ENCODE measurements at regions of chr2 and their contacts with region 1.

Region 1: GRCh38 chr2:235766278-235766677 is 272.4 kb downstream of the AGAP1 start:
- DNase-seq: peak; percentile 56
- ATAC-seq: peak; percentile 53
- H3K4me3 ChIP-seq: no peak overlapping the region
- H3K4me3 Mint-ChIP-seq: no peak overlapping the region
- H3K27ac ChIP-seq: no peak overlapping the region
- H3K27ac Mint-ChIP-seq: no peak overlapping the region
- H3K4me1 ChIP-seq: no peaks in the 10 kb centered on the region
- H3K4me1 Mint-ChIP-seq: no peaks in the 10 kb centered on the region
- H3K27me3 ChIP-seq: no peaks in the 10 kb centered on the region
- H3K27me3 Mint-ChIP-seq: peaks cover 6% of the 10 kb centered on the region
- CTCF ChIP-seq: peak; percentile 97

Region 2: DNA sequence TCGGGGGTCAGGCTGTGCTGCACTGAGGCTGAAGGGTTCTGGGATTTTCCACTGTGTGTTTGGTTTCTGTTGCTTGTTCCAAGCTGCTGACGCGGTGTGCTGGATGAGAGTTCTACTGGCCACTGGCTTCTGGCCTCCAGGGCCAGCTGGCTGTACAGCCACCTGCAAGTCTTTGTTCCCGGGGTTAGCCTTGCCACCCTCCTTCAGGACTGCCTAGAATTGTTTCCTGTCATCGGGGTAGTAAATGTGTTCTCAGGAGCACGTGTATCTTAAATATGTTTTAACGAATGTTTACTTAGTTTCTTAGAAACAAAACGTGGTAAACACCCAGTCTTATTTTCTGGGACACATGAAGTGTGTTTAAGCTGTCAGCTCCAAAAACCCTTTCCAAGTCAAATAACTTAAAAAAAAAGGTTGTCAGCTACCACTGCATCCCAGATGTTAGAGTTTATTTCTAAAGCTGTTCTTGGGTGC is 41.2 kb before region 1 on chr2:
- CTCF ChIA-PET with region 1: no interaction called
- POLR2A ChIA-PET with region 1: no interaction called
- intact Hi-C with region 1: no loop called
- DNase-seq: no peak
- ATAC-seq: no peak
- H3K4me3 ChIP-seq: no peak overlapping the region
- H3K4me3 Mint-ChIP-seq: no peak overlapping the region
- H3K27ac ChIP-seq: no peak overlapping the region
- H3K27ac Mint-ChIP-seq: no peak overlapping the region
- H3K4me1 ChIP-seq: no peaks in the 10 kb centered on the region
- H3K4me1 Mint-ChIP-seq: no peaks in the 10 kb centered on the region
- H3K27me3 ChIP-seq: peaks cover 0 to 3% (median 0%) of the 10 kb centered on the region in 4 experiments
- H3K27me3 Mint-ChIP-seq: peaks cover 12% of the 10 kb centered on the region
- CTCF ChIP-seq: no peak

Region 3: GRCh38 chr2:235802538-235803427 is 36.5 kb after region 1 on chr2:
- CTCF ChIA-PET with region 1: no interaction called
- POLR2A ChIA-PET with region 1: no interaction called
- intact Hi-C with region 1: no loop called
- DNase-seq: no peak
- ATAC-seq: no peak
- H3K4me3 ChIP-seq: no peak overlapping the region
- H3K4me3 Mint-ChIP-seq: no peak overlapping the region
- H3K27ac ChIP-seq: no peak overlapping the region
- H3K27ac Mint-ChIP-seq: no peak overlapping the region
- H3K4me1 ChIP-seq: no peaks in the 10 kb centered on the region
- H3K4me1 Mint-ChIP-seq: no peaks in the 10 kb centered on the region
- H3K27me3 ChIP-seq: no peaks in the 10 kb centered on the region
- H3K27me3 Mint-ChIP-seq: peaks cover 4% of the 10 kb centered on the region
- CTCF ChIP-seq: no peak

Region 4: DNA sequence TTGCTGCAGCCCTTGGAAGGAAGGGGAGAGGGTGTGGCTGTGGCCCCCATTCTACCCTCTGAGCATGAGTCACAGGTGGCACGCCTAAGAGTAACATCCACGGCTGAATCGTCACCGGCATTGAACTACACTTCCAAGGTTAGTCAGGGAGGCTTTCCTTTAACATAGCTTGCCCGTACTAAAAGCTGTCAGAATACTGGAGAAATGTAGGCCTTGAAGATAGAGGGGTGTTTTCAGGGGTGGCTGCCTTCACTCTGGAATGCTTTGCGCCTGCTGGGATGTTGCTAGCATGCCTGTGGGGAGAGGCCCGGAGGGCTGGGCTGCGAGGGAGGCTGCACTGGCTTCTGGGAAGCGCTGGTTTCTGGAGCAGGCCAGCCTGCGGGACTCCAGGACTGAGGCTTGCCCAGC is 61.3 kb after region 1 on chr2:
- CTCF ChIA-PET with region 1: no interaction called
- POLR2A ChIA-PET with region 1: no interaction called
- intact Hi-C with region 1: no loop called
- DNase-seq: no peak
- ATAC-seq: no peak
- H3K4me3 ChIP-seq: no peak overlapping the region
- H3K4me3 Mint-ChIP-seq: no peak overlapping the region
- H3K27ac ChIP-seq: no peak overlapping the region
- H3K27ac Mint-ChIP-seq: no peak overlapping the region
- H3K4me1 ChIP-seq: no peaks in the 10 kb centered on the region
- H3K4me1 Mint-ChIP-seq: no peaks in the 10 kb centered on the region
- H3K27me3 ChIP-seq: peaks cover 0 to 2% (median 0%) of the 10 kb centered on the region in 4 experiments
- H3K27me3 Mint-ChIP-seq: no peaks in the 10 kb centered on the region
- CTCF ChIP-seq: no peak

Region 5: DNA sequence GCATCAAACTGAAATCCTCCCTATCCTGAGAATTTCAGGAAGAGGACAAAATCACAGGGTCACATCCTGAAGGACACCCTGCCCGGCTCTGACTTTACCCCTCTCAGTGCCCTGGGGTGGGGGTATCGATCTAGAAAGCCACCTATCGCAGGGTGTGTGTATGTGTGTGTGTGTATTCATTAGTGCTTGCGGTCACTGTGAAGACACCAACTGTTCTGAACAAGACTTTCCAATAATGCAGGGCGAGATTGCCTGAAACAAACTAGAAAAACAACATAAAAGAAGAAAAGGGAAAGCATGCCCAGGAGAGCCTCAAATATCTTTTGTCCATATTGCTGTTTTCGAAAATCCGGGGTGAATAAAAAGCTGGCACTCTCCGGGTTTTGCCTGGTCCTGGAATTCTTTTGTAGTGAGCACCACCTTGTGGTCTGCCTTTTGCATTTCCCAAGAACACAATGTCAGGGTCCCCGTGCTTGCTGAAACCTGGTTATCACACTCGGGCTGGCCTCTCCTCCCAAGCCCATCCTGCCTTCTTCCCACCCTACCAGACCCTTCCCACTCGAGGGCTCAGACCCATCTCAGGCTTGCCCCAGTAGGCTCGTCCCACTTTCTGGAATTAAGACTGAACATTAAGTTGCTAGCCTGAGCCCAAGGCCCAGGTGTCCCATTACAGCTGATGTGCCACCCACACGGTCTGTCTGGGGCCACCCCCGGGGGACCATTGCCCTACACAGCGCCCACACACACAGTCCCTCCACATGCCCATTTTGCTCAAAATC is 1294.4 kb after region 1 on chr2:
- CTCF ChIA-PET with region 1: interaction called, 5 read pairs
- POLR2A ChIA-PET with region 1: no interaction called
- intact Hi-C with region 1: loop called (anchors 1 kb)
- DNase-seq: peak; percentile 56
- ATAC-seq: no peak
- H3K4me3 ChIP-seq: no peak overlapping the region
- H3K4me3 Mint-ChIP-seq: no peak overlapping the region
- H3K27ac ChIP-seq: no peak overlapping the region
- H3K27ac Mint-ChIP-seq: no peak overlapping the region
- H3K4me1 ChIP-seq: peaks cover 21 to 33% of the 10 kb centered on the region in 2 donors
- H3K4me1 Mint-ChIP-seq: peaks cover 36% of the 10 kb centered on the region
- H3K27me3 ChIP-seq: peaks cover 0 to 3% (median 0%) of the 10 kb centered on the region in 4 experiments
- H3K27me3 Mint-ChIP-seq: peaks cover 9% of the 10 kb centered on the region
- CTCF ChIP-seq: peak; percentile 55

Measured in B cell (primary cell).